IMR-90 (cell line): ENCODE measurements at regions of chr19 and their contacts with region 1.

Region 1: GRCh38 chr19:29610563-29611271 is 4.6 kb downstream of the POP4 start:
- DNase-seq: peak; percentile 77
- ATAC-seq: peak; percentile 82
- H3K4me3 ChIP-seq: no peak overlapping the region
- H3K27ac ChIP-seq: no peak overlapping the region
- H3K4me1 ChIP-seq: 0 out of 2 replicates have a peak, but pooled peaks cover 2% of the 10 kb centered on the region
- H3K27me3 ChIP-seq: no peaks in the 10 kb centered on the region
- CTCF ChIP-seq: peak; percentile 90
- POLR2A ChIP-seq: peak; percentile 55
- RAD21 ChIP-seq: peak; percentile 98

Region 2: GRCh38 chr19:29212648-29213573 is 397.8 kb before region 1 on chr19 and contains the start of gene UQCRFS1:
- CTCF ChIA-PET with region 1: no interaction called
- POLR2A ChIA-PET with region 1: no interaction called
- dilution Hi-C with region 1: no loop called
- in situ Hi-C with region 1: no loop called
- intact Hi-C with region 1: loop called (anchors 5 kb)
- DNase-seq: peak; percentile 89
- ATAC-seq: peak; percentile 99
- H3K4me3 ChIP-seq: peak within 1 kb of the TSS; percentile 100
- H3K27ac ChIP-seq: peak within 1 kb of the TSS; percentile 85
- H3K4me1 ChIP-seq: peaks cover 2% of the 10 kb centered on the region; the same call in 1 of the 2 replicates
- H3K27me3 ChIP-seq: peaks cover 3% of the 10 kb centered on the region
- CTCF ChIP-seq: no peak
- POLR2A ChIP-seq: peak; percentile 64
- RAD21 ChIP-seq: no peak
- total RNA-seq, gene UQCRFS1: 37.1 and 40.0 TPM in 2 replicates

Region 3: GRCh38 chr19:29665826-29666577 is 55.3 kb after region 1 on chr19:
- CTCF ChIA-PET with region 1: interaction called, 4 read pairs
- POLR2A ChIA-PET with region 1: no interaction called
- dilution Hi-C with region 1: no loop called
- in situ Hi-C with region 1: no loop called
- intact Hi-C with region 1: loop called (anchors 1 kb)
- DNase-seq: peak; percentile 66
- ATAC-seq: peak; percentile 21
- H3K4me3 ChIP-seq: peak overlapping the region; percentile 90
- H3K27ac ChIP-seq: peak overlapping the region; percentile 84
- H3K4me1 ChIP-seq: peaks cover 25% of the 10 kb centered on the region
- H3K27me3 ChIP-seq: no peaks in the 10 kb centered on the region
- CTCF ChIP-seq: no peak
- POLR2A ChIP-seq: peak; percentile 32; the same call in 1 of the 2 replicates
- RAD21 ChIP-seq: no peak

Region 4: GRCh38 chr19:29694669-29695627 is 84.2 kb after region 1 on chr19:
- CTCF ChIA-PET with region 1: interaction called, 3 read pairs
- POLR2A ChIA-PET with region 1: no interaction called
- dilution Hi-C with region 1: no loop called
- in situ Hi-C with region 1: loop called (anchors 5 kb)
- intact Hi-C with region 1: loop called (anchors 1 kb)
- DNase-seq: peak; percentile 70
- ATAC-seq: peak; percentile 99
- H3K4me3 ChIP-seq: no peak overlapping the region
- H3K27ac ChIP-seq: no peak overlapping the region
- H3K4me1 ChIP-seq: peaks cover 6% of the 10 kb centered on the region; the same call in 1 of the 2 replicates
- H3K27me3 ChIP-seq: no peaks in the 10 kb centered on the region
- CTCF ChIP-seq: peak; percentile 90
- POLR2A ChIP-seq: no peak
- RAD21 ChIP-seq: peak; percentile 76

Region 5: GRCh38 chr19:29714953-29715700 is 104.4 kb after region 1 on chr19 and contains the start of gene C19orf12:
- CTCF ChIA-PET with region 1: interaction called, 46 read pairs
- POLR2A ChIA-PET with region 1: interaction called, 3 read pairs
- dilution Hi-C with region 1: no loop called
- in situ Hi-C with region 1: no loop called
- intact Hi-C with region 1: loop called (anchors 1 kb)
- DNase-seq: peak; percentile 23
- ATAC-seq: peak; percentile 82
- H3K4me3 ChIP-seq: peak within 1 kb of the TSS; percentile 91
- H3K27ac ChIP-seq: peak within 1 kb of the TSS; percentile 93
- H3K4me1 ChIP-seq: peaks cover 6% of the 10 kb centered on the region
- H3K27me3 ChIP-seq: no peaks in the 10 kb centered on the region
- CTCF ChIP-seq: no peak
- POLR2A ChIP-seq: peak; percentile 84
- RAD21 ChIP-seq: no peak
- total RNA-seq, gene C19orf12: 16.3 and 19.2 TPM in 2 replicates

Region 6: GRCh38 chr19:29873024-29873800 is 262.5 kb after region 1 on chr19:
- CTCF ChIA-PET with region 1: no interaction called
- POLR2A ChIA-PET with region 1: no interaction called
- dilution Hi-C with region 1: no loop called
- in situ Hi-C with region 1: no loop called
- intact Hi-C with region 1: loop called (anchors 5 kb)
- DNase-seq: no peak
- ATAC-seq: peak; percentile 87
- H3K4me3 ChIP-seq: peak overlapping the region; percentile 20; the same call in 1 of the 2 replicates
- H3K27ac ChIP-seq: no peak overlapping the region
- H3K4me1 ChIP-seq: peaks cover 1% of the 10 kb centered on the region; the same call in 1 of the 2 replicates
- H3K27me3 ChIP-seq: peaks cover 3% of the 10 kb centered on the region; the same call in 1 of the 2 replicates
- CTCF ChIP-seq: peak; percentile 65
- POLR2A ChIP-seq: no peak
- RAD21 ChIP-seq: peak; percentile 67